ENCODE measurements at regions of chr1 and their contacts with region 1.

Region 1: DNA sequence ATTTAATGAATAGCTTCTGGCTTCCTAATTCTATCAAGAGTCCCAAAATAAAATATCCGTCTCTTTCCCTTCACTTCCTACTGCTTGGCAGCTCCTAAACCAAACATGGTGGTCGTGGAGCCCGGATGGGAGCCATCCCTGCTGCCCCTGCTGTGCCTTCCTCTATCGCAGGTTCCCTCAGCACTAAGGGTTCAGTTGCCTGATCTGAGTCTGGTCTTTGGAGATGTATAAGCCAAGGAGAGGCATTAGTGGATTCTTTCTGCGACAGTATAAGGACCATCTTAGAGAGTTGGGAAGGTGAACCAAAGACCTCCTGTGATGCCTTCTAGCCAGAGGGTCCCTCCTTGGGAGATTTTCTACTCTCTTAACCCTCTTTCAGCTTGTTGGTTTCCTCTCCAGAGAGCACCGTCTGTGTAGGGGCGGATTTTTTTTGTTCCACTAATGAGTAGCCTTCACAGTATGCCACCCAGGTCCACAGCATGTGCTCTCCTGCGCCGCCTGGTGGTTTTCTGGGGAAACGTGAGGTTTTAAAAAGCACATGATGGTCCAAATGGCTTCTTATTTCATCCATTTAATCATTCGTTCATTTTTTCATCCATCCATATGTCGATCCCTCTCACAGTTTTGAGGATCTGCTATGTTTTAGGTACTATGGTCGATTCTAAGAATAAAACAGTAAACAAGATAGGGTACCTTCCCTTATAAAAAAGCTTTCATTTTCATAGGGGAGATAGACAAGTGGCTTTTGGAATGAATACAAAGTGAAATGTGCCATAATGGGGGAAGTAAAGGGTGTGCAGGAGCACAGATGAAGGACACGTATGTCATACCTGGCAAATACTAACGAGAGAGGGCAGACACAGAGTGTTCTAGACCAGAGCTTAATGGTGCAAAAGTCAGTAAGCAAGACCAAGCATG is 71.0 kb downstream of the NFASC start:
- DNase-seq: peak in 1 of 2 donors; percentile 43
- H3K4me3 ChIP-seq: no peak overlapping the region
- H3K27ac ChIP-seq: no peak overlapping the region
- H3K4me1 ChIP-seq: peaks cover 0 to 3% (median 0%) of the 10 kb centered on the region in 4 donors
- H3K27me3 ChIP-seq: no peaks in the 10 kb centered on the region
- CTCF ChIP-seq: peak; percentile 85 to 94

Region 2: GRCh38 chr1:204814181-204814884 is 127.3 kb before region 1 on chr1:
- intact Hi-C with region 1: loop called (anchors 5 kb)
- DNase-seq: no peak
- H3K4me3 ChIP-seq: no peak overlapping the region
- H3K27ac ChIP-seq: no peak overlapping the region
- H3K4me1 ChIP-seq: peaks cover 0 to 21% (median 10%) of the 10 kb centered on the region in 4 donors
- H3K27me3 ChIP-seq: no peaks in the 10 kb centered on the region
- CTCF ChIP-seq: no peak

Region 3: DNA sequence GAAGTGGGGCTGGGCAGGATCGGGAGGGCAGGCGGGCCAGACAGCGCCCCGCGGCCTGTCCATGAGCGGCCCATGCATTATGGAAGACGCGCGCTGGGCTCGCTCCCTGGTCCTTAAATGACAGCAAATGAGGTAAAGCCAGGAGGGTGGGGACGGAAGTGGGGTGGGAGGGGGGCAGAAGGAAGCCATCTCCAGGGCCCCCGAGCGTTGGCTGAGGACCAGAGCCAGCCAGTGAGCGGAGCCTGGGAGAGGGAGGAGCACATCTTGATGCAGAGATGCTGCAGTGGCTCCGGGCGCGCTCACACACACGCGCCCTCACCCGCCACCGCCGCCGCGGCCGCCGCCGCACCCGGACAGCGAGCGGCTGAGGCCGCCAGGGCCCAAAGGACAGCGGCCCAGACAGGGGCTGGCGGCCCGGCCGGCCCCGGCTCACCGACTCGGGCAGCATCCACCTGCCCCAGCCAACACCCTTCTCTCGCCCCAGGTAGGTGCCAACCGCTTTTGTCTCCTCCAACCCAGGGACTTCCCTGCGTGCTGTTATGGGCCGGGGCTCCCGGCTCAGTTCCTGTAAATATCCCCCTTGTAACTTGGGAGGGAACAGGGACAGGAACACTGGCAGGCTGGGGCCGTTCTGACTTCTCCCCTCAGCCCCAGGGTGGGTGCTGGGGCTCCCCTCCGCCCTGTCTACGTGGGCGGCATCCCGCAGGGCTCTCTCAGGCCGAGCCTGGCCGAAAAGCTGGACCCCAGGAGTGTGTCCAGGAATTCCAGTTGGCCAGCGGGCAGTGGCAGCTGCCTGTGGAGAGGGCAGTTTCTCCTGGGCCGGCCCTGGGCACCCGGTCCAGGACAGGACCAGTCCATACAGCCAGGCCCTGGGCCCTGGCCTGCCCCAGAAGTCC is 101.5 kb after region 1 on chr1 and contains the start of gene CNTN2:
- intact Hi-C with region 1: no loop called
- DNase-seq: no peak
- H3K4me3 ChIP-seq: no peak within 1 kb of the TSS
- H3K27ac ChIP-seq: no peak within 1 kb of the TSS
- H3K4me1 ChIP-seq: peaks cover 0 to 13% (median 9%) of the 10 kb centered on the region in 4 donors
- H3K27me3 ChIP-seq: peaks cover 0 to 69% of the 10 kb centered on the region in 2 donors
- CTCF ChIP-seq: no peak

Region 4: DNA sequence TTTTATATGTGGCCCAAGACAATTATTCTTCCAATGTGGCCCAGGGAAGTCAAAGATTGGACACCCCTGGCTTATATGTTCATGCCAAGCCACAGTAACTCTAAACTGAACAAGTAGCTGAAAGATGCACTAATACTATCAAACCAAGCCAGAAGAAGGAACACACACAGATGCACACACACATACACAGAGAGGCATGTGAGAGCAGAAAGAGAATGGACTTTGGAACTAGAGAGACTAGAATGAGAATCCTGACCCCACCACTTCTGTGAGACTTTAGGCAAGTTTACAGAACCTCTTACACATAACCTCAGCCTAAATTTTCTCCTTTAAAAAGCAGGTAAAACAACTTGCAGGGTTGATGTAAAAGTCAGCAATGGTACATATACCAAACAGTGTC is 153.7 kb after region 1 on chr1:
- intact Hi-C with region 1: no loop called
- DNase-seq: no peak
- H3K4me3 ChIP-seq: no peak overlapping the region
- H3K27ac ChIP-seq: no peak overlapping the region
- H3K4me1 ChIP-seq: no peaks in the 10 kb centered on the region
- H3K27me3 ChIP-seq: no peaks in the 10 kb centered on the region
- CTCF ChIP-seq: no peak